GM10248 (cell line): ENCODE measurements at regions of chrX and their contacts with region 1.

Region 1: DNA sequence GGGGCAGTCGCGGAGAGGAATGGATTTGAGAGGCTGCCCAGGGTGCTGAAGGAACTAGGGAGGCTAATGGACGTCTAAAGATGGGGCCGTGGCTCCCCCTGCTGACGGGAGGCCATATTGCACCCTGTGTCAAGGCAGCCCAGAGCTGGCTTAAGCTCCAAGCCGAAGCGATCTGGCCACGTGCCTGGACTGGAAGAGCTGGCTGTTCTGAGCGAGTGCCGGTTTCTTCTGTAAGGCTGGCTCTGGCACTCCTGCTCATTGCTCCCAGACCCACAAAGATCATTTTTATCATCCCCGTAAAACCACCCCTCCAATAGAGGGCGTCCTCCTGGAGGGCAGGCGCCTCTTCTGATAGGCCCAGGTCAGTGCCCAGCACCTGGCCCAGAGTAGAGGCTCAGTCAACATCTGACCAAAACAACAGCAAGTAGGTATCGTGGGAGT is 5.6 kb downstream of the PNCK start:
- DNase-seq: peak; percentile 74
- CTCF ChIP-seq: peak; percentile 59

Region 2: DNA sequence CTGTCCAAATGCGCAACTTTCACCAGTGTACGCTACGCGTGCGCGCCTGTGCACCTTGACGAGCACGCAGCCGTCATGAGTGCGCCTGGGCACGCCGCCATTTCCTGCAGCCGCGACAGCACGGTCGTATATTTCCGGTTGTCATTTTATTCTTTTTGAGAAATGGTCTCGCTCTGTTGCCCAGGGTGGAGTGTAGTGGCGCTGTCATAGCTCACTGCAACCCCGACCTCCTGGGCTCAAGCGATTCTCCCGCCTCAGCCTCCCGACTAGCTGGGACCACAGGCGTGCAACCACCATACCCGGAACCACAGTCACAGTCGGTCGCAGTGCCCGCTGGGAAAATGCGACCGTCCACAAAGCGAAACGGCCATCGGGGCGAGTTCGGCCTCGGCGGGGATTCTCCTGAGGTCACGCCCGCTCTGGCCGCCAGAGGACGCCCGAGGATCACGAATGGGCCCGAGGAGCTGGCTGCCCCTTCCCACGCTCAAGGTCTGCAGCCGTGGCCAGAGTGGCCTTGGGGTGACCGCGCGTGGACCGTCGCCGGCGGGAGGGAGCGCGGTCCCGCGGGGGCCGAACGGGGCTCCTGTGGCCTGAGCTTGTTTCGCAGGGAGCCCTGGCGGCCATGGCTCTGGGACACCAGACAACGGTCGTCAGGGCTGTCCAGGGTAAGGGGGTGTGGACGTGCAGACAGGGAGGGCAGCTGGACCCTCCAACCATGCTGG is 635.4 kb before region 1 on chrX:
- CTCF ChIA-PET with region 1: interaction called, 12 read pairs
- POLR2A ChIA-PET with region 1: no interaction called
- DNase-seq: peak; percentile 85
- CTCF ChIP-seq: peak; percentile 86

Region 3: DNA sequence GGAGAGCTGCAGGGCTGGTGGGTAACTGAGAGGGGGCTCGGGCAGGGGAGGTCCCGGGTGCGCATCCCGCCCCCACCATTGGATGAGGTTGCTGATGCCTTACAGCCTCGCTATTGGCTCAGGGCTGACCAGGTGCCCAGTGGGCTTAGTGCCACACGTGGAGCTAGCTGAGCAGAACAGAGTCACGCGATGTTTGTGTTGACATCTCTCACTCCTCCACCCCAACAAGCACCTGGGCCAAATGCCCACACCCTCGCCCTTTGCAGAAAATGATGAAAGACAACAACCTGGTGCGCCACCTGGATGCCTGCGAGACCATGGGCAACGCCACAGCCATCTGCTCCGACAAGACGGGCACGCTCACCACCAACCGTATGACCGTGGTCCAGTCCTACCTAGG is 118.7 kb before region 1 on chrX:
- CTCF ChIA-PET with region 1: interaction called, 28 read pairs
- POLR2A ChIA-PET with region 1: no interaction called
- DNase-seq: no peak
- CTCF ChIP-seq: no peak

Region 4: DNA sequence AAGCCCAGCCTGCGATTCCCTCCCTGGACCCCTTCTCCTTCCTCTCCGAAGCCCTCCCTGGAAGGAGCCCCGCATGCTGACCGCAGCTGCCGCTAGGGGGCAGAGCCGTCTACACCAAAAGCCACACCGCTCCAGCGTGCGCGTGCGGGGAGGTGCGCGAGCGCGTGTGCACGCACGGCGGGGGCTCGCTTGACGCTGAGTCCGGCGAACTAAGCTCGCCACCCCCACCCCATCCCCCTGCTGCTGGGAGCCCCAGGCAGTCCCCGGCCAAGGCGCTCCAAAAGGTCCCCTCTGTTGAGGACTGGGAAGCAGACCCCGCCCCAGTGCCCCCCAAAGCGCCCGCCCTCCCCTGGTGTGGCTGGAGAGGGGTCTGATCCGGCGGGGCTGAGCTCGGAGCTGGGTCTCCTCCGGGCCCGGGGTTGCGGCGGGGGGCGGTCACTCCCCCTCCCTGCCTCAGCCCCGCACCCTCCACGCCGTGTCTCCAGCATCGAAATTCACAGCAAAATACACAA is 58.0 kb before region 1 on chrX:
- CTCF ChIA-PET with region 1: interaction called, 25 read pairs
- POLR2A ChIA-PET with region 1: no interaction called
- DNase-seq: peak; percentile 68
- CTCF ChIP-seq: peak; percentile 78

Region 5: GRCh38 chrX:153684467-153685155 is 16.6 kb after region 1 on chrX:
- CTCF ChIA-PET with region 1: interaction called, 16 read pairs
- POLR2A ChIA-PET with region 1: no interaction called
- DNase-seq: no peak
- CTCF ChIP-seq: no peak